Prostate gland (tissue), 2 donors: ENCODE measurements at regions of chr11 and their contacts with region 1.

Region 1: GRCh38 chr11:62383822-62384221 is 35.0 kb upstream of the SCGB1A1 start:
- DNase-seq: no peak
- H3K4me3 ChIP-seq: no peak overlapping the region
- H3K27ac ChIP-seq: no peak overlapping the region
- H3K4me1 ChIP-seq: peaks cover 8% of the 10 kb centered on the region
- H3K27me3 ChIP-seq: no peaks in the 10 kb centered on the region
- CTCF ChIP-seq: no peak
- POLR2A ChIP-seq: no peak

Region 2: GRCh38 chr11:62419314-62419929 is 35.6 kb after region 1 on chr11:
- intact Hi-C with region 1: no loop called
- DNase-seq: no peak
- H3K4me3 ChIP-seq: no peak overlapping the region
- H3K27ac ChIP-seq: peak overlapping the region; percentile 32 to 61
- H3K4me1 ChIP-seq: no peaks in the 10 kb centered on the region
- H3K27me3 ChIP-seq: no peaks in the 10 kb centered on the region
- CTCF ChIP-seq: no peak
- POLR2A ChIP-seq: no peak

Region 3: DNA sequence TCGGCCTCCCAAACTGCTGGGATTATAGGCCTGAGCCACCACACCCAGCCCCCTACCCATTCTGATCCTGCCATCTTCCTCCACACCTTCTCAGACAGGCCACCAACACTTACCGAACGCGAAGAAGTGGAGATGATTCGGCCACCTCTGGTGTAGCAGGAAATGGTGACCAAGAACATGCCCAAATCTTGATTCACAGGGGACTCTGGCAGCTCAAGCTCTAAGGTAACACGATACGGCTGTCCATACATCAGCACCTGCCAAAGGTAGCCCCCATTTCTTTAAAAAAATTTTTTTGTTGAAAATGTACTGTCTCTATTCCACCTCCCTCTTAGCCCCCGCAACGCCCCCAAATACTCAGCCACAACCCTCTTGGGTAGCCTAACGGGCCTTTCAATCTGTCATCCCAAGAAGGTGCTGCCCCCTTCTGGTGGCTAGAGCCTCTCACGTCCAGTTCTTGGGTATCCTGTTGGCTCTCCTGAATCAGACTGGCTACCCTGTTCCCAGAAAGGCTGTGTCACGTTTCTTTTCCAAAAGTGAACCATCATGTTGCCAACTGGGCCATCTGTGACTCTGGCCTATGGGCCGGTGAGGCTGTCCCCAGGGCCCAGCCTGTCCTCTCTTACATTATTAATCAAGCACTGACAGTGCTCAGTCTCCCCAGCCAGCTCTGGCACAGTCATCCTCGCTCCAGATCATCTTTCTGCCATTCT is 310.8 kb after region 1 on chr11:
- intact Hi-C with region 1: loop called (anchors 5 kb)
- DNase-seq: peak; percentile 75
- H3K4me3 ChIP-seq: no peak overlapping the region
- H3K27ac ChIP-seq: no peak overlapping the region
- H3K4me1 ChIP-seq: no peaks in the 10 kb centered on the region
- H3K27me3 ChIP-seq: no peaks in the 10 kb centered on the region
- CTCF ChIP-seq: peak; percentile 31 to 71 (median 66)
- POLR2A ChIP-seq: no peak

Region 4: DNA sequence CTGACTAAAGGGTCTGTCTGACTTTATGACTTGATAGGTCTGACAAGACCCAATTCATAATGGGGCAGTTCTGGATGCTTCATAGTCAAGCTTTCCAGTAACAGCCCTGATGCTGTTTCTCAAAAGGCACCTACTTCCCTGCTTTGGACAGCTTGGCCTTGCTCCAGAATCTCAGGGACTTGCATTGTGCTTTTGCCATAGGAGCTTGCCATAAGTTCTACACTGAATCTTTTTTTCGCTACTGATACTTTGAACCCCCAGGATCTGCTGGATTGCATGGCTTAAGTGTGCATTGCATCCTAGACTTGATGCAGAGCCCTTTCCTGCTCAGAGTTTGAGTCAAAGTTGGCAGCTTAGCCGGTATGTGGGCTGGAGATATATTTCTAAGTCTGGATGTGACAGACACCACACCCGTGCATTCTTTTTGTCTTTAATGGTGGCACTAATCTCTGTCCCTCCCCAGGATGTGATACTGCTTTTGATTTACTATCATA is 479.9 kb after region 1 on chr11:
- intact Hi-C with region 1: no loop called
- DNase-seq: no peak
- H3K4me3 ChIP-seq: no peak overlapping the region
- H3K27ac ChIP-seq: no peak overlapping the region
- H3K4me1 ChIP-seq: peaks cover 5% of the 10 kb centered on the region
- H3K27me3 ChIP-seq: no peaks in the 10 kb centered on the region
- CTCF ChIP-seq: no peak
- POLR2A ChIP-seq: no peak